ENCODE measurements at regions of chr3 and their contacts with region 1.

Region 1: GRCh38 chr3:119579366-119580165 is at the start of gene ADPRH:
- DNase-seq: peak; percentile 57
- H3K4me3 ChIP-seq: peak within 1 kb of the TSS; percentile 53 to 58
- H3K27ac ChIP-seq: peak within 1 kb of the TSS; percentile 87 to 89
- H3K4me1 ChIP-seq: no peaks in the 10 kb centered on the region
- H3K27me3 ChIP-seq: no peaks in the 10 kb centered on the region
- CTCF ChIP-seq: no peak
- POLR2A ChIP-seq: peak; percentile 18
- total RNA-seq, gene ADPRH: 8.2 to 14.8 TPM

Region 2: GRCh38 chr3:119524931-119525662 is 54.5 kb before region 1 on chr3:
- intact Hi-C with region 1: loop called (anchors 5 kb)
- DNase-seq: no peak
- H3K4me3 ChIP-seq: no peak overlapping the region
- H3K27ac ChIP-seq: no peak overlapping the region
- H3K4me1 ChIP-seq: no peaks in the 10 kb centered on the region
- H3K27me3 ChIP-seq: no peaks in the 10 kb centered on the region
- CTCF ChIP-seq: peak in 2 of 4 experiments; percentile 32 to 52
- POLR2A ChIP-seq: no peak

Region 3: GRCh38 chr3:119662604-119663373 is 83.2 kb after region 1 on chr3:
- intact Hi-C with region 1: loop called (anchors 5 kb)
- DNase-seq: no peak
- H3K4me3 ChIP-seq: no peak overlapping the region
- H3K27ac ChIP-seq: peak overlapping the region; percentile 31 to 41
- H3K4me1 ChIP-seq: no peaks in the 10 kb centered on the region
- H3K27me3 ChIP-seq: no peaks in the 10 kb centered on the region
- CTCF ChIP-seq: no peak
- POLR2A ChIP-seq: no peak